Left ventricle myocardium superior (tissue), 1 donor: ENCODE measurements at regions of chr10 and their contacts with region 1.

Region 1: GRCh38 chr10:131885391-131886161 is 15.2 kb upstream of the PPP2R2D start:
- DNase-seq: peak; percentile 87
- ATAC-seq: peak; percentile 98

Region 2: DNA sequence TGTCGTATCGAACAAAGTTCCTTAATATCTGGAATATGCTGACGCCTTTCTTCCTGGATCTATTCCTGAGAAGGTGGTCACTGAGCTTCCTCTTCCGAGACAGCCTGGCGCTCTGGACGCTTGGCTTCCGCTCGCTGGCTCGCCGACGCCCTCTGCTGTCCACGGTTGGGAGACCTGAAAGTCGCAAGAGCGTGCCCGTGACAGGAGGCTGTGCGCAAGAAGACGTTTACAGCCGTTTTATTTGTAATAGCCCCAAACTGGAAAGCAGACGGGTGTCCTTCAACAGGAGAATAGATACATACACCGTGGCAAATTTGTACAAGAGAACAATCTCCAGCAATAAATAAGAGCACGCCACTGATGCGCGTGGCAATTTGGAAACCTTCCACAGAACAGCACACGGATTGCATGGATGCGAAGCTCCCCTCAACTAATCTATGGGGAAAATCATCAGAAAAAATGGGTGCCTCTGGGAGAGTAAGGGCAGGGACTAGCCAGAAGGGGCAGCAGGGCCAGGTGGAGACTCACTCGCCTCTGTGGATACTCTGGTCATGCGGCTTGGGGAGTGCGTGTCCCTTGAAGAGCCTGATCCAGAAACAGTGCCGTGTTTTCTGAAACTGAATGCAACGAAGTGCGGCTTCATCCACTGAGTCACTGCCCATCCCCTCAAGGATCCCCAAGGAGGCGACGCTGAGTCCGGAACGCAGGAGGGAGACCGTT is 137.7 kb after region 1 on chr10:
- intact Hi-C with region 1: loop called (anchors 5 kb)
- DNase-seq: peak; percentile 91
- ATAC-seq: peak; percentile 94

Region 3: DNA sequence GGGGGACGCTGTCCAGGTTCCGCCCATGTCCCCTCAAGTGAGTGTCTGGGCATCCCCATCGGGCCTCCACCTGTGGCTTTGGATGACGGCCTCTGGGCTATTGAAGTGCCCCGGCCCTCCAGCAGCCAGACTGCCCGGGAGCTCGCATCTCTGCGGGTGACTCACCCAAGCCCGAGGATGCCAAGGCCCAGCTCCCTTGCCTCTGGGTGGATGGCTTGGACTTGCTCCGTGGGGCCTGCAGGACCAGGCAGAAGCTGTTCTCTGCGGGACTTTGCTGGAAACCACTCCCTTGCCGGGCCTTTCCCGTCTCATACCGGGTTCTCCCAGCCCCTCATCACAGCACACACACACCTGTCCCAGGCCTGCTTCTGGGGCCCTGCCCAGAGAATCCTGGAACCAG is 323.6 kb after region 1 on chr10:
- intact Hi-C with region 1: no loop called
- DNase-seq: peak; percentile 34
- ATAC-seq: no peak